Left colon (tissue), 2 donors: ENCODE measurements at regions of chr5 and their contacts with region 1.

Region 1: GRCh38 chr5:170740551-170741205 is 42.8 kb upstream of the GABRP start:
- DNase-seq: no peak
- ATAC-seq: no peak

Region 2: DNA sequence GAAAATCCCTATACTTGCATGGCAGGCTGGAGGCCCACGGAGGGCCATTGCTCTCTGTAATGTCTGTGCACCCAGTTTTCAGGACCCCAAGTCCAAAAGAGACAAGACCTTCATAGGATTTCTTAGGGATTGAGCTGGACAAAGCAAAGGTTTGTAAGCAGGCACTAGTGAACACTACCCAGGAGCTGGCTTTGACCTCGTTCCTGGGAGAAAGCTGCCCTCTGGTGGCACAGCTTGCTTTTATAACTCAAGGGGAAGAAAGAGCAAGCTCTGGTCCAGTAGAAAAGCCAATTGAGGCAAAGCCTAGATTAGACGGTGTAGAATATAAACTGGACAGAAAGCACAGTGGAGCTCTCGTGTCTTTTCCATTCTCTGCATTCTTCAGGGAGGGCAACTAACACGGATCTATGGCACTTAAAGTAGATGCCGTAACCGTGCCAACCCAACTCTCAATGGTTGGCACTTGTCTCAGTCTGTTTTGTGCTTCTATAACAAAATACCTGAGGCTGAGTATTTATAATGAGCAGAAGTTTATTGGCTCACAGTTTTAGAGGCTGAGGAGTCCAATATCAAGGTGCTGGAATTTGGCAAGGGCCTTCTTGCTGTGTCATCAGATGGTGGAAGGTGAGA is 50.8 kb after region 1 on chr5:
- intact Hi-C with region 1: loop called in 1 of 2 experiments (anchors 5 kb)
- DNase-seq: peak; percentile 41 to 71
- ATAC-seq: peak; percentile 84

Region 3: DNA sequence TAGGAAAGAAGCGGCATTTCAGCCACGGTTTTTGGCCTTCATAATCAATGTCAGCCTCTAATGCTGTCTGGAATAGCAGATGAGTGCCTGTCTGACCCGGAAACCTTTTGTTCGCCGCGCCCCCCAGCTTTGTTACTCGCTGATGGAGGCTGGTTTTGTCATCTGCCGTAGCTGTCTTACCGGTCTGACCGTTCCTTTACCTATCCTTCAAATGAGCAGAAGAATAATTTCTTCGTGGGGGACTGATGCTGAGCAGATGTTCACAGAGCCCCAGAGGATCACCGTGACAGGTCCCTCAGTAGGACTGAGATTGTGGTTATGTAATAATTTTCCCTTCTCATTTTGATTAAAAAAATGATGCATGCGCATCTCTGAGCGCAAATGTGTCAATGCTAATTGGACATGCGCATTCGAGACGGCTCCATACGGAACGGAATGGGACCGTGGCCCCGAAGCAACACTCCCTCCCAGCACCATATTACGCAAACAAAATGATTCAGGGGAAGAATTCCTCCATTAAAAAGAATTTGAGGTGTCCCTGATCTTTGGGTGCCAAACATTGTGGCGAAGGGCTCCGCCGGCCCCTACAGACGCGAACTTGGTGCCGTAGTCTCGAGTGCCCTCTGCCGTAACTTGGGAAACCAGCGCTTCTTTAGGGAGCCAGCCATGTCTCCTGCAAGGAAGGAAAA is 596.0 kb after region 1 on chr5:
- intact Hi-C with region 1: loop called in 1 of 2 experiments (anchors 5 kb)
- DNase-seq: peak; percentile 29 to 37
- ATAC-seq: peak; percentile 71